Left ventricle myocardium inferior (tissue), 1 donor: ENCODE measurements at regions of chr3 and their contacts with region 1.

Region 1: DNA sequence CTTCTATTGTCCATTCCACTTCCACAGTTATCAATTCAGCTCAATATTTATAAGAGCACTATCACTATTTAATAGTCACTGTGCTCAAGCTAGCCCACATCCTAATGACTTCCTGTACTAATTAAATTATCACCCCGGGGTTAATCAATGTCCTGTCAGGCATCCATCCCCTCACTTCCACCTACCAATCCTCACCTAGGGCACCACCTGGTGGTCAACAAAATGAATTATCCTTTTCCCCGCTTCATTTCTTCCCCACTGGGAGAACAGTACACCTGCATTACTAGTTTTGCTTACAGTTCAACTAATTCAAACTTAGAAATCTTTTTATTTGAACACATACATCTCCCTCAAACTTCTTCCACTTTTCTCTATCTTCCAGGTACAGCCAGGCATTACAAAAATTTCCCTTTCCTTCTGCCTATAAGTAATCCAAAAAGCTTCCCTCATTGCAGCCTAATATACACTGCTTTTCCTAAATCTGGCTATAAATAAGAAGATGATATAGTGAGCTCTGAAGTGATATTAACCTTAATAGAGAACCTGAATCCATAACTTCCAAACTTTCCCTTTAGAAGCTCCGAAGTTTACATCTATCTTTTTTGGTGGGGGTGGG is 68.5 kb downstream of the TMCC1 start:
- DNase-seq: no peak
- H3K4me3 ChIP-seq: no peak overlapping the region
- H3K27ac ChIP-seq: no peak overlapping the region
- H3K4me1 ChIP-seq: peaks cover 28% of the 10 kb centered on the region
- H3K27me3 ChIP-seq: no peaks in the 10 kb centered on the region
- CTCF ChIP-seq: peak; percentile 77

Region 2: DNA sequence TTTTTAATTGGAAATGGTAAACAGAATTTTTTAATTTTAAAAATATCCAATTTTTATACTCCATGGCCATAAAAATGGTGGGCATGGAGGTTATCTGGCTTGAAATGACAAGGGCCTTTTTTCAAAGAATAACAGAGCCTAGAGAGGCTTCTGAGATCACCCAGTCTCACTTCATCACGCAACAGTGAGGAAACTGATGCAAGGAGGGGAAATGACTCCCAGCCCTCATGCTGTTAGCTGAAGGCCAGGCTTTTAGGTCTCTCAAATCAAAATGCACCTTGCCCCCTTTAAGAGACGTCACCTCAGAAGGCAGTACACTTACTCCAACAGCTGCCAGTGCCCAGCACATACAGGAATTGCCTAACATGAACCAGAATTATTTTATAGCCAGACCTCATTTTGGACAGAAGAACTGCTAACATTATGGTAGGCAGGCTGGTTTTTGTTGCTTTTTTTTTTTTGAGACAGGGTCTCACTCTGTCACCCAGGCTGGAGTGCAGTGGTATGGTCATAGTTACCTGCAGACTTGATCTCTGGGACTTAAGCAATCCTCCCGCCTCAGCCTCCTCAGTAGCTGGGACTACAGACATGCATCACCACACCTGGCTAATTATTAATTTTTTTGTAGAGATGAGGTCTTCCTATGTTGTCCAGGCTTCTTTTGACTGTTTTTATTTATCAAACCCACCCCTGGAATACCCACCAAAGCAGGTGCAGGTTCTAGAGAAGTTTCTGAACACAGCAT is 712.6 kb before region 1 on chr3:
- intact Hi-C with region 1: no loop called
- DNase-seq: no peak
- H3K4me3 ChIP-seq: no peak overlapping the region
- H3K27ac ChIP-seq: no peak overlapping the region
- H3K4me1 ChIP-seq: peaks cover 13% of the 10 kb centered on the region
- H3K27me3 ChIP-seq: no peaks in the 10 kb centered on the region
- CTCF ChIP-seq: no peak

Region 3: GRCh38 chr3:129474984-129475804 is 349.8 kb before region 1 on chr3:
- intact Hi-C with region 1: loop called (anchors 10 kb)
- DNase-seq: no peak
- H3K4me3 ChIP-seq: no peak overlapping the region
- H3K27ac ChIP-seq: no peak overlapping the region
- H3K4me1 ChIP-seq: no peaks in the 10 kb centered on the region
- H3K27me3 ChIP-seq: no peaks in the 10 kb centered on the region
- CTCF ChIP-seq: no peak

Region 4: GRCh38 chr3:129596194-129597086 is 228.6 kb before region 1 on chr3:
- intact Hi-C with region 1: no loop called
- DNase-seq: peak; percentile 92
- H3K4me3 ChIP-seq: peak overlapping the region; percentile 82
- H3K27ac ChIP-seq: peak overlapping the region; percentile 96
- H3K4me1 ChIP-seq: peaks cover 98% of the 10 kb centered on the region
- H3K27me3 ChIP-seq: no peaks in the 10 kb centered on the region
- CTCF ChIP-seq: no peak

Region 5: GRCh38 chr3:129650256-129650872 is 174.7 kb before region 1 on chr3:
- intact Hi-C with region 1: loop called (anchors 2 kb)
- DNase-seq: peak; percentile 47
- H3K4me3 ChIP-seq: no peak overlapping the region
- H3K27ac ChIP-seq: no peak overlapping the region
- H3K4me1 ChIP-seq: peaks cover 27% of the 10 kb centered on the region
- H3K27me3 ChIP-seq: no peaks in the 10 kb centered on the region
- CTCF ChIP-seq: peak; percentile 79

Region 6: GRCh38 chr3:129934234-129935123 is 109.4 kb after region 1 on chr3:
- intact Hi-C with region 1: loop called (anchors 10 kb)
- DNase-seq: no peak
- H3K4me3 ChIP-seq: peak overlapping the region; percentile 46
- H3K27ac ChIP-seq: no peak overlapping the region
- H3K4me1 ChIP-seq: no peaks in the 10 kb centered on the region
- H3K27me3 ChIP-seq: no peaks in the 10 kb centered on the region
- CTCF ChIP-seq: peak; percentile 94